Activated T-helper 2 cell treated with anti-CD3 and anti-CD28 coated beads, Interferon-gamma antibody, Interleukin-2, Interleukin-4, amounts not matched to agents 10 μg/mL and 5 μg/mL and 100 μg/mL, durations not matched to agents 14 hours and 24 hours and 36 hours (primary cell): ENCODE measurements at regions of chr13 and their contacts with region 1.

Region 1: GRCh38 chr13:60230593-60230992 is 66.9 kb upstream of the DIAPH3 start:
- DNase-seq: no peak
- H3K4me3 Mint-ChIP-seq: no peak overlapping the region
- H3K27ac Mint-ChIP-seq: peak overlapping the region; percentile 61
- H3K4me1 Mint-ChIP-seq: peaks cover 13% of the 10 kb centered on the region
- H3K27me3 Mint-ChIP-seq: peaks cover 33% of the 10 kb centered on the region

Region 2: GRCh38 chr13:60134376-60134775 is 96.2 kb before region 1 on chr13:
- intact Hi-C with region 1: loop called (anchors 1 kb)
- DNase-seq: no peak
- H3K4me3 Mint-ChIP-seq: no peak overlapping the region
- H3K27ac Mint-ChIP-seq: no peak overlapping the region
- H3K4me1 Mint-ChIP-seq: peaks cover 26% of the 10 kb centered on the region
- H3K27me3 Mint-ChIP-seq: no peaks in the 10 kb centered on the region

Region 3: GRCh38 chr13:60163478-60164233 is 66.9 kb before region 1 on chr13 and contains the start of gene DIAPH3:
- intact Hi-C with region 1: loop called (anchors 5 kb)
- DNase-seq: peak; percentile 93
- H3K4me3 Mint-ChIP-seq: peak within 1 kb of the TSS; percentile 96
- H3K27ac Mint-ChIP-seq: peak within 1 kb of the TSS; percentile 92
- H3K4me1 Mint-ChIP-seq: peaks cover 38% of the 10 kb centered on the region
- H3K27me3 Mint-ChIP-seq: no peaks in the 10 kb centered on the region
- total RNA-seq, gene DIAPH3: 30.1 and 30.8 TPM in 2 replicates

Region 4: GRCh38 chr13:60244381-60244780 is 13.8 kb after region 1 on chr13:
- intact Hi-C with region 1: loop called (anchors 1 kb)
- DNase-seq: no peak
- H3K4me3 Mint-ChIP-seq: no peak overlapping the region
- H3K27ac Mint-ChIP-seq: peak overlapping the region; percentile 5
- H3K4me1 Mint-ChIP-seq: peaks cover 17% of the 10 kb centered on the region
- H3K27me3 Mint-ChIP-seq: peaks cover 23% of the 10 kb centered on the region

Region 5: DNA sequence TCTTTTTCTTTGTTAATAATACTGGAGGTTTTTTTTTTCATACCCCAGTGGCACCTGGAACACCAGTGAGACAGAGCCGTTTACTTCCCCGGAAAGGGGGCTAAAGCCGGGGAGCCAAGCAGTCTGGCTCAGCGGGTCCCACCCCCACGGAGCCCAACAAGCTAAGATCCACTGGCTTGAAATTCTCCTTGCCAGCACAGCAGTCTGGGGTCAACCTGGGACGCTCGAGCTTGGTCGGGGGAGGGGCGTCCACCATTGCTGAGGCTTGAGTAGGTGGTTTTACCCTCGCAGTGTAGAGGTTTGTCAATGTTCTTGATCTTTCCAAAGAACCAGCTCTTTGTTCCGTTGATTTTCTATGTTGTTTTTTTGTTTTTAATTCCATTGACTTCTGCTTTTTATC is 27.8 kb after region 1 on chr13:
- intact Hi-C with region 1: loop called (anchors 1 kb)
- DNase-seq: no peak
- H3K4me3 Mint-ChIP-seq: no peak overlapping the region
- H3K27ac Mint-ChIP-seq: no peak overlapping the region
- H3K4me1 Mint-ChIP-seq: peaks cover 12% of the 10 kb centered on the region
- H3K27me3 Mint-ChIP-seq: peaks cover 13% of the 10 kb centered on the region

Region 6: DNA sequence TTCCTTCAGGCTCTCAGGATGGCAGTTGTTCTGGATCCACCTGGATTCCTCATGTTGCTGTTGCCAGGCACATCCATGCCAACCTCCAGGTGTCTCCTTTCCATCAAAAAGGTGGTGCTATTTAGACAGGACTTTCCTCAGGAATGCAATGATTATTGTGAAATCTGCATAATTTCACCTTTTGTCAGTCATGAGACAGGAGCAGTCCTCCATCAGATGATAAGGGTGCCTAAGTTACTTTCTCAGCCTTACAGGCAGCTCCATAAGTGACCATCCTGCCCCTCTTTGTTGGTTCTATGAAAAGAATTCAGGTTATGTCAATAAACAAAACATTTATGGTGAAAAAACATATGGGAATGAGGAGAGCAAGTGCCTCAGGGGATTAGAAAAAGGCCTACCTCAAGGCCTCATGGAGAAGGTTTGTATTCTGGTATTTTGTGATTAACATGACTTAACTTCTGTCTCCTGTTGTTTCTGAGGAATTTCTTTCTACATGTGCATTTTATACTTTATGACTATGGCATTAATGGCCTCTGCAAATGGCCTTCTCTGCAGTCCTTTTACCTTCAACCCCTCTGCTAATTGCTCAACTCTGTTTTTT is 43.4 kb after region 1 on chr13:
- intact Hi-C with region 1: no loop called
- DNase-seq: no peak
- H3K4me3 Mint-ChIP-seq: no peak overlapping the region
- H3K27ac Mint-ChIP-seq: no peak overlapping the region
- H3K4me1 Mint-ChIP-seq: no peaks in the 10 kb centered on the region
- H3K27me3 Mint-ChIP-seq: peaks cover 20% of the 10 kb centered on the region

Region 7: GRCh38 chr13:60689571-60689970 is 459.0 kb after region 1 on chr13:
- intact Hi-C with region 1: loop called (anchors 5 kb)
- DNase-seq: no peak
- H3K4me3 Mint-ChIP-seq: peak overlapping the region; percentile 42
- H3K27ac Mint-ChIP-seq: peak overlapping the region; percentile 78
- H3K4me1 Mint-ChIP-seq: peaks cover 24% of the 10 kb centered on the region
- H3K27me3 Mint-ChIP-seq: no peaks in the 10 kb centered on the region